PC-3 (cell line): ENCODE measurements at regions of chr15 and their contacts with region 1.

Region 1: DNA sequence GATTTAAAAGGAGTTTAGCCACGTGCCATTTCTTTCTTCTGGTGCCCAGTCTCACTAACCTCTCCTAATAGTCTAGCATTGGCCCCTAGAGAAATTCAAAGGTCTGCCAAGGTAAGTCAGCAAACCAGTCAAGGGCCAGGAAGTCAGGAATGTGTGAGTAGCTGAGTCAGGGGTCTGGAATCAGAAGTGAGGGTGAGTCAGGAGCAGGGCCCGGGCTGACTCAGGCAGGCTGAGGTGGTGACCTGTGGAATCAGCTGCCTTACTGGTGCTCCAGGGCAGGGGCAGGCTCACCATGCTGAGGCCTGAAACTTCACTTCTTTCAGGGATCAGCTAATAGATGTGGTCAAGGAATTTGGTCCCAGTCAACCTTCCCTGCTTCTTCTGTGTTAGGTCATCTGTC is 105.8 kb upstream of the MYZAP start:
- DNase-seq: peak; percentile 90
- ATAC-seq: peak; percentile 100
- H3K4me3 ChIP-seq: no peak overlapping the region
- H3K27ac ChIP-seq: peak overlapping the region; percentile 60
- H3K4me1 ChIP-seq: peaks cover 22% of the 10 kb centered on the region
- H3K27me3 ChIP-seq: no peaks in the 10 kb centered on the region
- CTCF ChIP-seq: no peak

Region 2: DNA sequence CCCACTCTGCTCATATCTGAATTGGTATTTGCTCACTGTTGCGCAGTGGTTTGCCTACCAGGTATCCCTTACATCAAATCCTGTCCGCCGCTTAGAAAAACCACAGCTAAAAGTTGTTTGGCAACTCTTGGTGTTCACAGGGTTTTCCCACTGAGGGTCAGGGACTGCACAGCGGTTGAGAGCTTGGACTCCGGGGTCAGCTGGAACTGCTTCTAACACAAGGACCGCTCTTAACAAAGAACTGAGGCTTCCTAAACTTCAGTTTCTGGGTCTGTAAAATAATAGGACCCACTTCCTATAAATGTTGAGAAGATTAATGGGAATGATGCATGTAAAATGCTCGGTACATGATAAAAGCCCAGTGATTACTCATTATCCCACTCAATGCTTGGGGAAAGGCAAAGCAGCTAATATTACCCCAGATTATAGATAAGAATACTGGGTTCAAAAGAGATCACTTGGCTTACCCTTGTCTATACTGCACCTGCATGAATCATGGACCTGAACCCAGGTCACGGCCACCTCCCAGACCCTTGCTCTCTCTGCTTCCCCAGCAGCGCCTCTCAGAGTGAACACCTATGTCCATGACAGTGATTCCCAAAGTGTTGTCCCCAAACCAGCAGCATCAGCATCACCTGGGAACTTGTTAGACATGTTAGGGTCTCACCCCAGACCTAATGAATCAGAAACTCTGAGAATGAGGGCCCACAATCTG is 982.0 kb after region 1 on chr15:
- CTCF ChIA-PET with region 1: no interaction called
- POLR2A ChIA-PET with region 1: interaction called, 10 read pairs
- intact Hi-C with region 1: no loop called
- DNase-seq: no peak
- ATAC-seq: no peak
- H3K4me3 ChIP-seq: no peak overlapping the region
- H3K27ac ChIP-seq: peak overlapping the region; percentile 92
- H3K4me1 ChIP-seq: peaks cover 32% of the 10 kb centered on the region
- H3K27me3 ChIP-seq: no peaks in the 10 kb centered on the region
- CTCF ChIP-seq: no peak